ENCODE measurements at regions of chr13 and their contacts with region 1.

Region 1: GRCh38 chr13:30905932-30906383 is at the start of gene MEDAG:
- DNase-seq: no peak
- H3K4me3 ChIP-seq: peak within 1 kb of the TSS; percentile 50 to 53
- H3K27ac ChIP-seq: peak within 1 kb of the TSS; percentile 91
- H3K4me1 ChIP-seq: peaks cover 46% of the 10 kb centered on the region
- H3K27me3 ChIP-seq: no peaks in the 10 kb centered on the region
- CTCF ChIP-seq: no peak
- POLR2A ChIP-seq: no peak
- total RNA-seq, gene MEDAG: 46.4 TPM

Region 2: DNA sequence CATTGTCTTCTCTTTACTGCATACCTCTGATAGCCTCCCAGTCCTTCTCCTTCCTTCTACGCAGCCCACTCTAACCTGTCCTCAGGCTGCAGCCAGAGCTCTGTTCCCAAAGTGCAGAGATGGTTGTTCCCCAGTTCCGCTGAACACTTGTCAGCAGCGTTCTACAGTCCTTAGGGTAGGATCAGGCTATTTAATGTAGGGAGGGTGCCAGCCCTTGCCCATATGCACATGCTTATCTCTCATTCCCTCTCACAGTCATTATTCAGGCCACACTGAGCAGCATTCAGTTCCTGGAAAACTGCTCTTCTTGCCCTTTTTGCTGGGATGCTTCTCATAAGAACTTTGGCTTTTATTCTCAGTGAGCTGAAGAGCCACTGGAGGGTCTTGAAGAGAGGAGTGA is 1905.1 kb before region 1 on chr13:
- intact Hi-C with region 1: no loop called
- DNase-seq: no peak
- H3K4me3 ChIP-seq: no peak overlapping the region
- H3K27ac ChIP-seq: no peak overlapping the region
- H3K4me1 ChIP-seq: no peaks in the 10 kb centered on the region
- H3K27me3 ChIP-seq: no peaks in the 10 kb centered on the region
- CTCF ChIP-seq: no peak
- POLR2A ChIP-seq: no peak

Region 3: DNA sequence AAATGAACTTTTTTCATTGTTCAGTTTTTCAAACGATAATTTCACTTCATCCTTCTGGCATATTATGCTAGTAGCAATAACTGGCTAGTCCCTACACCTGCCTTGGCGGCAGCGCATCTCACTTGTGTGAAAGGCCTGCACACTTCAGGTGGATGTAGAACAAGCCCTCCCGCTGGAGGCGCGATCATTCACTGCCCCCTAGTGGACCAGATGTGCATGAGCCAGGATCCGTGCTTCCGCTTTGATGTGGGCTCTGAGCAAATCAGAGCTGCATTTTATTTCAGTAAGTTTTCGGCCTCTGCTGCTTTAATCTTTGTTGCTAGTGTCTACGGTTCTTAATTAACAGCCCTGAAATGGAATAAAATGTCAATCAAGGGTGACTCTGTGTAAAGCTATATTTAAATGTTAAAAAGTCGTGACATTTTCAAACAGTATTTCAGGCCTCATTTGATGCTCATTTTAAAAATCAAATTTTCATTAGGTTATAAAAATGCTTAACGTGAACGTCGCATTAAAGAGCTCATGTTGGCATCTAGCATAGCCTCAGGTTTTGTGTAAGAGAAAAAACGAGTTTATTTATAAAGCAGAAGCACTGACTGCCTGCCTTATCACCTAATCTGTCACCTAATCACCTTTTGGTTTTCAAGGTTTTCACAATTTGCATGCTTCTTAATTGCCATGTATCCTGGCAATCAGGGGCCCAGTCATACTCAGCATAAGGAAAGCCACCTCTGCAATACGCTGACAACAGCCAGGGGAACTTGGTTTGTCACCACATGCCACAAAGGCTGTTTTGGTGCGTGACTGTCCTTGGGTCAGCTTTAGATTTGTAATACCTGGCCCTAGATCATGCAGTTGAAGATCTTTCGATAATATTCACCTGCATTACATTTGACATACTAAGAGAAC is 138.7 kb after region 1 on chr13:
- intact Hi-C with region 1: loop called (anchors 10 kb)
- DNase-seq: no peak
- H3K4me3 ChIP-seq: no peak overlapping the region
- H3K27ac ChIP-seq: peak overlapping the region; percentile 77
- H3K4me1 ChIP-seq: peaks cover 40% of the 10 kb centered on the region
- H3K27me3 ChIP-seq: no peaks in the 10 kb centered on the region
- CTCF ChIP-seq: peak; percentile 76 to 90 (median 87)
- POLR2A ChIP-seq: no peak

Region 4: GRCh38 chr13:31073859-31074718 is 168.1 kb after region 1 on chr13:
- intact Hi-C with region 1: no loop called
- DNase-seq: peak in 1 of 2 donors; percentile 52
- H3K4me3 ChIP-seq: no peak overlapping the region
- H3K27ac ChIP-seq: no peak overlapping the region
- H3K4me1 ChIP-seq: no peaks in the 10 kb centered on the region
- H3K27me3 ChIP-seq: no peaks in the 10 kb centered on the region
- CTCF ChIP-seq: no peak
- POLR2A ChIP-seq: no peak